ENCODE measurements at regions of chr7 and their contacts with region 1.

Region 1: DNA sequence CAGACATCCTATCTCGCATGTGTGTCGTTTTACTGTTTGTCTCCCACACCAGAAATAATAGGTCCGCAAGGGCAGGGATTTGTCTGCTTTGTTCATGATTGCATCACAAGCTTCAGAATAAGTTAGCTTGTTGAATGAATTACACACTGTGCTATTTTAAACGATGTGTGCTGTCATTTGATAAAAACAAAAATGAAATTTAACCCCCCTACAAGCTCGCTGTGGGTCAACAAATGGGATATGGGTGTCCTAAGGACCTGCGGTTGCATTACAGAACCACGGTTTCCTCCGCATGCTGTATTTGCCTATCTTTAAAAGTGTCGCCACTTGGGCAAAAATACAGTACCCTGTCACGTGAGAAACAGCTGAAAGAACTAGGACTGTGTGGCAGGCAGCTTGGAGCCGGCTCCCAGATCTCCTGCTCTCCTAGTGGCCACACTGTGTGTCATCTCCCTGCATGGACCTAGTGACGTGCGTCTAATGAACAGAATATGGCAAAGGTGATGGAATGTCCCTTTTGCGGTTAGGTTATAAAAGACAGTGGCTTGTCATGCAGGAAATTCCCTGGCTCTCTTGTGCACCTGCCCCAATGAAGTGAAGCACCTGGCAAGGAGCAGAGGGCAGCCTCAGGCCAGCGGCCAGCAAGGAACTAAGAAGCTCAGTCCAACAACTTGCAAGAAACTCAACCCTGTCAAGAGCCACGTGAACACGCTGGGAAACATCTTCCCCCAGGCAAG is 32.9 kb upstream of the CRYGN start:
- DNase-seq: no peak
- ATAC-seq: no peak
- H3K4me3 Mint-ChIP-seq: no peak overlapping the region
- H3K27ac Mint-ChIP-seq: peak overlapping the region; percentile 53
- H3K4me1 Mint-ChIP-seq: peaks cover 44% of the 10 kb centered on the region
- H3K27me3 Mint-ChIP-seq: no peaks in the 10 kb centered on the region

Region 2: GRCh38 chr7:151415375-151416112 is 57.3 kb before region 1 on chr7:
- CTCF ChIA-PET with region 1: no interaction called
- POLR2A ChIA-PET with region 1: no interaction called
- intact Hi-C with region 1: loop called in 1 of 2 experiments (anchors 2 kb)
- DNase-seq: no peak
- ATAC-seq: no peak
- H3K4me3 Mint-ChIP-seq: no peak overlapping the region
- H3K27ac Mint-ChIP-seq: no peak overlapping the region
- H3K4me1 Mint-ChIP-seq: peaks cover 32% of the 10 kb centered on the region
- H3K27me3 Mint-ChIP-seq: peaks cover 25% of the 10 kb centered on the region

Region 3: GRCh38 chr7:151514461-151515275 is 41.9 kb after region 1 on chr7:
- CTCF ChIA-PET with region 1: interaction called, 3 read pairs
- POLR2A ChIA-PET with region 1: interaction called, 3 read pairs
- intact Hi-C with region 1: loop called (anchors 2 to 5 kb)
- DNase-seq: no peak
- ATAC-seq: no peak
- H3K4me3 Mint-ChIP-seq: no peak overlapping the region
- H3K27ac Mint-ChIP-seq: no peak overlapping the region
- H3K4me1 Mint-ChIP-seq: peaks cover 74% of the 10 kb centered on the region
- H3K27me3 Mint-ChIP-seq: no peaks in the 10 kb centered on the region

Measured in activated CD4-positive, alpha-beta T cell treated with anti-CD3 and anti-CD28 coated beads for 36 hours (primary cell).